Transverse colon (tissue), 4 donors: ENCODE measurements at regions of chr19 and their contacts with region 1.

Region 1: GRCh38 chr19:45069056-45069455 is 7.2 kb downstream of the ZNF296 start:
- DNase-seq: no peak
- H3K4me3 ChIP-seq: no peak overlapping the region
- H3K27ac ChIP-seq: no peak overlapping the region
- H3K4me1 ChIP-seq: no peaks in the 10 kb centered on the region
- H3K27me3 ChIP-seq: no peaks in the 10 kb centered on the region
- CTCF ChIP-seq: no peak
- EP300 ChIP-seq: no peak
- POLR2A ChIP-seq: no peak

Region 2: DNA sequence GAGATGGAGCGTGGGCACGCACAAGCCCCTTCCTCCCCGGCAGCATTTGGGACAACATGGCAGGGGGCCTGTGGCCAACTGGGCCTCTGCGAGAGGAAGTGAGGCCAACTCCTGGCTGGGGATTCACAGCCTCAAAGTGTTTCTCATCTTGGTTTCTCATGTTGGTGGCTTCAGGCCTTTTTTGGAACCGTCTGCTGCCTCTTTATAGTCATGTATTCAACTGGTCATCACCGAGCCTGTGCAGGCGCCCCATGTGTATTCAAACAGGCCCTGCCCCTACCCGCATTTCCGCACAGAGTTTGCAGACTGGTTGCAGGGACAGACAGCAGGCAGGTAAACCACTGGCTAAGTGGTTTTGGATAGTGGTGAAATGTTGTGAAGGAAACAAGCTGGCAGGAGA is 85.1 kb before region 1 on chr19:
- in situ Hi-C with region 1: loop called in 2 of 4 experiments (anchors 5 to 10 kb)
- intact Hi-C with region 1: no loop called
- DNase-seq: no peak
- H3K4me3 ChIP-seq: no peak overlapping the region
- H3K27ac ChIP-seq: no peak overlapping the region
- H3K4me1 ChIP-seq: no peaks in the 10 kb centered on the region
- H3K27me3 ChIP-seq: no peaks in the 10 kb centered on the region
- CTCF ChIP-seq: no peak
- EP300 ChIP-seq: no peak
- POLR2A ChIP-seq: no peak

Region 3: DNA sequence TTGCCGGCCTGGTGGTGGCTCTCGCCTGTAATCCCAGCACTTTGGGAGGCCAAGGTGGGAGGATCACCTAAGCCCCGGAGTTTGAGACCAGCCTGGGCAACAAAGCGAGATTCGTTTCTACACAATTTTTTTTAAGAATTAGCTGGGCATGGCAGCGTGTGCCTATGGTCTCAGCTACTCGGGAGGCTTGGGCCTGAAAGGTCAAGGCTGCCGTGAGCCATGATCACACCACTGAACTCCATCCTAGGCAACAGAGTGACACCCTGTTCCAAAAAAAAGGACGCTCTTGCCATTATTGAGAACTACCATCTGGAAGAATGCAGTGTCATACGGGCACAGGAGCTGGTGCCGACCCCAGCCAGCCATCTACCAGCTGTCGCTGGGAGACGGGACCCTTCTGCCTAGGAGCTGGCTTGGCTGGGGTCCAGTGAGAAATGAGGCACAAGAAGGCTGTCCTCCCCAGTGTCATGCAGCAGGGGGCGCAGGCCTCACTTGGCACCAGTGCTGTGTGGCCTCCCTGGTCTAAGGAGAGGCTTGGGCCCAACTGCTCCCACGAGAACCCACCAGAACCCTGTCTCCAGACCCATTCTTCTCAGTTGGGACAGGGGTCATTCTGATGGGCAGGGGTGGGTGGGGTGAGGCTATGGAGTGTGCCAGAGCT is 80.0 kb before region 1 on chr19:
- in situ Hi-C with region 1: loop called in 2 of 4 experiments (anchors 5 to 10 kb)
- intact Hi-C with region 1: no loop called
- DNase-seq: peak; percentile 80
- H3K4me3 ChIP-seq: no peak overlapping the region
- H3K27ac ChIP-seq: no peak overlapping the region
- H3K4me1 ChIP-seq: no peaks in the 10 kb centered on the region
- H3K27me3 ChIP-seq: no peaks in the 10 kb centered on the region
- CTCF ChIP-seq: peak; percentile 54 to 82 (median 65)
- EP300 ChIP-seq: no peak
- POLR2A ChIP-seq: no peak

Region 4: DNA sequence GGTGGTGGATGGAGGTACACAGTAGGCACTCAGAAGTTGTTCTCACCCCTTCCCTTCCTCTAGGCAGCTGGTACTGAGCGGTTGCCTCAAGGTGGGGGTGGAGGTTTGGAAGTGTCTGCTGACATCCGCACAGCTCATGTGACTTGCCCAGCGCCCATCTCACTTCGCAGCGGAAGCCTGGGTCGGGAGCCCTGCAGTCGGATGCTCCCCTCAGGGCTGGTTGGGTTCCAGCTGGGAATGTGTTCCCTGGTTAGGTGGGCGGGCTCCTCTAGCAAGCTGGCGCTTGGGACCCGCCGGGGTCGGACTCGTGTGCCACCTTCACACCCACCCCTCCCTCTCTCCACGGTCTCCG is 34.1 kb after region 1 on chr19:
- in situ Hi-C with region 1: no loop called
- intact Hi-C with region 1: no loop called
- DNase-seq: no peak
- H3K4me3 ChIP-seq: no peak overlapping the region
- H3K27ac ChIP-seq: peak overlapping the region in 3 of 4 donors; percentile 0 to 31 (median 7)
- H3K4me1 ChIP-seq: peaks cover 5 to 51% (median 32%) of the 10 kb centered on the region in 4 donors
- H3K27me3 ChIP-seq: no peaks in the 10 kb centered on the region
- CTCF ChIP-seq: no peak
- EP300 ChIP-seq: no peak
- POLR2A ChIP-seq: no peak

Region 5: DNA sequence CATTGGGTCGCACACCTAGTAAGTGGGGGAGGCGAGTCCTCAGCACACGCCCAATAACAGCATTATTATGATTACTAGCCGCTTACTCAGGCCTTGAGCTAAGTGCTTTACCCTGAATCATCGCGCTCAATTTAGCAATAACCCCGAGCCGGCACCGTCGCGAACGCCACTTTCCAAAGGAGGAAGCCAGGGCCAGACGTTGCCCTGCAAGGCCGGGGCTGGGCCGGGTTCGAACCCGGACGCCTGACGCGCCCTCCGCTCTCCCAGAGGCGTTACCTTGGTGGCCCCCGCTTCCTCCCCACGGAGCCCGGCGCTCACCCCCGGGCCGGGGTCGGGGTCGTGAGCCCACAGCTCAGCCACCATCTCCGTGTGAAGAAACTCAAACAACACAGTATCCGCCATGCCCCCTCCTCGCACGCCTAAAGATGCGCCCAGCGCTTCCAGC is 108.8 kb after region 1 on chr19 and contains the start of gene TRAPPC6A:
- in situ Hi-C with region 1: no loop called
- intact Hi-C with region 1: no loop called
- DNase-seq: no peak
- H3K4me3 ChIP-seq: peak within 1 kb of the TSS; percentile 78 to 91 (median 90)
- H3K27ac ChIP-seq: peak within 1 kb of the TSS; percentile 91 to 98 (median 95)
- H3K4me1 ChIP-seq: peaks cover 11 to 34% (median 29%) of the 10 kb centered on the region in 4 donors
- H3K27me3 ChIP-seq: no peaks in the 10 kb centered on the region
- CTCF ChIP-seq: no peak
- EP300 ChIP-seq: no peak
- POLR2A ChIP-seq: peak; percentile 54
- total RNA-seq, gene TRAPPC6A: 15.7 to 51.2 (median 29.7) TPM in 3 of 4 donors, not detected in the other